Pancreas (tissue), 10 donors: ENCODE measurements at regions of chr5 and their contacts with region 1.

Region 1: GRCh38 chr5:1666812-1667588 is 132.6 kb downstream of the MRPL36 start:
- DNase-seq: peak in 5 of 6 donors; percentile 25 to 93 (median 77)
- ATAC-seq: peak; percentile 74 to 86 (median 85)
- H3K4me3 ChIP-seq: peak overlapping the region; percentile 14 to 44 (median 29)
- H3K27ac ChIP-seq: no peak overlapping the region
- H3K4me1 ChIP-seq: peaks cover 0 to 6% (median 3%) of the 10 kb centered on the region in 3 donors
- H3K27me3 ChIP-seq: peaks cover 0 to 3% (median 0%) of the 10 kb centered on the region in 4 donors
- CTCF ChIP-seq: peak in 1 of 4 donors; percentile 7

Region 2: GRCh38 chr5:2047341-2047927 is 380.4 kb after region 1 on chr5:
- intact Hi-C with region 1: loop called in 1 of 3 experiments (anchors 10 kb)
- DNase-seq: no peak
- ATAC-seq: no peak
- H3K4me3 ChIP-seq: no peak overlapping the region
- H3K27ac ChIP-seq: no peak overlapping the region
- H3K4me1 ChIP-seq: no peaks in the 10 kb centered on the region
- H3K27me3 ChIP-seq: no peaks in the 10 kb centered on the region
- CTCF ChIP-seq: no peak